SK-N-SH (cell line): ENCODE measurements at regions of chr2 and their contacts with region 1.

Region 1: GRCh38 chr2:177148477-177149154 is 64.0 kb upstream of the HNRNPA3 start:
- DNase-seq: peak; percentile 70
- H3K4me3 ChIP-seq: peak overlapping the region; percentile 49 to 61
- H3K27ac ChIP-seq: no peak overlapping the region
- H3K4me1 ChIP-seq: peaks cover 4 to 5% of the 10 kb centered on the region in 2 experiments; a peak in 3 of 4 replicates
- H3K27me3 ChIP-seq: no peaks in the 10 kb centered on the region
- CTCF ChIP-seq: peak; percentile 91
- EP300 ChIP-seq: no peak
- RAD21 ChIP-seq: peak; percentile 76

Region 2: DNA sequence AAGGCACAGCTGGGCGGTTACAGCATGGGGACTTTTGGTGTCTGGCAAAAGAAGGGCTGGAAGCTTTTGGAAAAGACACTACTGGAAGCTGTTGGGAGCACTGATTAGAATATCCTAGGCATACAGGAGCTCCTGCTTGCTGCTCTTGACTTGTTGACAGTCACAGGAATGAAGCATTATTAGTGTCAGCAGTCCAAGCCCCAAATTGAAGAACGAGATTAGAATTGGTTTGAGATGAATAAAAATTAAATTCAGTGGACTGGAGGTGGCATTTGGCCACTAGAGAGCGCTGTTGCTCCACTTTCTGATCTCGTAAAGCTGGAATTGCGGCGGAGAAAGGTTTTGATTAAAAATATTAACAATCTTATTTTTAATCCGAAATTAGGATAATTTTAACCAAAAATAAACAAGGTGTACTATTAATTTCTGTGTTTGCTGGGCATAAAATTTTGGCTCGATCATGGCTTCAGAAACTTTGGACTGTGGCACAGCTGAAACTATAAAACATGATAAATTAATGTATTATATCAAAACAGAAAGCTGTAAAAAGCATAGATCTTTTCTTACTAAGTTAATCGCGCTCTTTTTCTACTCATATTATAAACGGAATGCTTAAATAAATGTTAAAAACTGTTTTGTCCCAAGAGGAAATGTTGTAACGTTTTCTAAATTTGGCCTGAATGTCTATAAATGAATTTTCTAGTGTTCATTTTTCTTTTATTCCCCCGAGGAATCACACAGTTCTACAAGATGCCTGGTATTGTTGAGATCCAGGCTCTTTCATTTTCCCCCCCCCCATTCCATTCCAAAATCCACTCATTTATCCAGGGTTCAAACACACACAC is 1021.5 kb before region 1 on chr2:
- CTCF ChIA-PET with region 1: interaction called, 83 read pairs
- POLR2A ChIA-PET with region 1: interaction called, 5 read pairs
- DNase-seq: peak; percentile 63
- H3K4me3 ChIP-seq: peak overlapping the region; percentile 19 to 25; a peak in 1 of 4 replicates
- H3K27ac ChIP-seq: no peak overlapping the region; a peak in 1 of 4 replicates
- H3K4me1 ChIP-seq: peaks cover 4 to 20% of the 10 kb centered on the region in 2 experiments; a peak in 3 of 4 replicates
- H3K27me3 ChIP-seq: no peaks in the 10 kb centered on the region; the same call in 1 of the 2 replicates
- CTCF ChIP-seq: peak; percentile 97
- EP300 ChIP-seq: no peak; a peak in 1 of 4 replicates
- RAD21 ChIP-seq: peak; percentile 94

Region 3: GRCh38 chr2:176643646-176644045 is 505.0 kb before region 1 on chr2:
- CTCF ChIA-PET with region 1: interaction called, 75 read pairs
- POLR2A ChIA-PET with region 1: interaction called, 3 read pairs
- DNase-seq: peak; percentile 62
- H3K4me3 ChIP-seq: no peak overlapping the region
- H3K27ac ChIP-seq: peak overlapping the region in 1 of 2 experiments; percentile 29; a peak in 2 of 4 replicates
- H3K4me1 ChIP-seq: peaks cover 15 to 26% of the 10 kb centered on the region in 2 experiments; a peak in 3 of 4 replicates
- H3K27me3 ChIP-seq: no peaks in the 10 kb centered on the region
- CTCF ChIP-seq: 0 out of 2 replicates have a peak, but pooled peaks have one; percentile 7
- EP300 ChIP-seq: no peak
- RAD21 ChIP-seq: no peak

Region 4: GRCh38 chr2:176682278-176682677 is 466.3 kb before region 1 on chr2:
- CTCF ChIA-PET with region 1: interaction called, 15 read pairs
- POLR2A ChIA-PET with region 1: no interaction called
- DNase-seq: no peak
- H3K4me3 ChIP-seq: no peak overlapping the region; a peak in 1 of 4 replicates
- H3K27ac ChIP-seq: peak overlapping the region in 1 of 2 experiments; percentile 80; a peak in 1 of 4 replicates
- H3K4me1 ChIP-seq: peaks cover 0 to 44% of the 10 kb centered on the region in 2 experiments; a peak in 2 of 4 replicates
- H3K27me3 ChIP-seq: no peaks in the 10 kb centered on the region
- CTCF ChIP-seq: no peak
- EP300 ChIP-seq: no peak
- RAD21 ChIP-seq: no peak

Region 5: GRCh38 chr2:176826984-176827668 is 321.5 kb before region 1 on chr2:
- CTCF ChIA-PET with region 1: interaction called, 231 read pairs
- POLR2A ChIA-PET with region 1: no interaction called
- DNase-seq: no peak
- H3K4me3 ChIP-seq: no peak overlapping the region
- H3K27ac ChIP-seq: no peak overlapping the region
- H3K4me1 ChIP-seq: no peaks in the 10 kb centered on the region; a peak in 1 of 4 replicates
- H3K27me3 ChIP-seq: no peaks in the 10 kb centered on the region
- CTCF ChIP-seq: no peak
- EP300 ChIP-seq: no peak
- RAD21 ChIP-seq: no peak

Region 6: GRCh38 chr2:177129610-177130009 is 19.0 kb before region 1 on chr2:
- CTCF ChIA-PET with region 1: interaction called, 12 read pairs
- POLR2A ChIA-PET with region 1: no interaction called
- DNase-seq: no peak
- H3K4me3 ChIP-seq: no peak overlapping the region
- H3K27ac ChIP-seq: no peak overlapping the region
- H3K4me1 ChIP-seq: no peaks in the 10 kb centered on the region; a peak in 1 of 4 replicates
- H3K27me3 ChIP-seq: no peaks in the 10 kb centered on the region; the same call in 1 of the 2 replicates
- CTCF ChIP-seq: no peak
- EP300 ChIP-seq: no peak
- RAD21 ChIP-seq: no peak